ENCODE measurements at regions of chr15 and their contacts with region 1.

Region 1: GRCh38 chr15:40525855-40526254 is 39.0 kb downstream of the CCDC32 start:
- DNase-seq: no peak
- ATAC-seq: no peak

Region 2: GRCh38 chr15:40593588-40594428 is 68.0 kb after region 1 on chr15 and contains the start of gene KNL1:
- intact Hi-C with region 1: loop called (anchors 10 kb)
- DNase-seq: peak; percentile 89
- ATAC-seq: peak; percentile 97
- total RNA-seq, gene KNL1: 0.89 TPM

Region 3: DNA sequence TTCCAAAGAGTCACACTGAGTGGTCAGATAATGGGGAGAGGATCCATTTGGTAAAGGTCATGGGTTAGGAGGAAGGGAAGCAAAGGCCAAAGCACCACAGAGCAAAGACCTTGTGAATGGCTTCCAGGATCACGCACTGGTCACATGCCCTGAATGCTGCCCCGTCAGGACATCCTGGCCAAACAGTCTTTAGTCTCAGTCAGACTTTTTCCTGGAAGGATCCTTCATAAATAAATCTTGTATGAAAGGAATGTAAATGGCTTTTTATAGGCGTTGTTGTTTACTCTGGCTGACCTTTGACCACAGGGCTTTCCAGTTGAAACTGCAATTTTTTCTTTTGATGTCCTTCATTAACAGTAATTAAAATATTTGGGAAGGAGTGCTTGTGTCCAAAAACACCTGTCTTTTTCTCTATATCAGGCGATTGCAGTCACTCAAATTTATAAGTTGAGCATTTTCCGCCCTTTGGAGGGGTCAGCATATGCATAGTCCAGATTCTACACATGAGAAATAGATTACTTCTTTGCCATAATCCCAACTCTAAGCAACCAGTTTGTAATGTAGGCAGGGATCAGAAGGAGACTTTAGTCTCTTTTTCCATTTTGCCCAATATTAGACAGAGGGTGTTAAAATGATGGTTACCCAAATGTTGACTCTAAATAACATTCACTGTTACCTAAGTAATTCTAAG is 475.8 kb after region 1 on chr15:
- intact Hi-C with region 1: no loop called
- DNase-seq: no peak
- ATAC-seq: no peak